ENCODE measurements at regions of chr2 and their contacts with region 1.

Region 1: DNA sequence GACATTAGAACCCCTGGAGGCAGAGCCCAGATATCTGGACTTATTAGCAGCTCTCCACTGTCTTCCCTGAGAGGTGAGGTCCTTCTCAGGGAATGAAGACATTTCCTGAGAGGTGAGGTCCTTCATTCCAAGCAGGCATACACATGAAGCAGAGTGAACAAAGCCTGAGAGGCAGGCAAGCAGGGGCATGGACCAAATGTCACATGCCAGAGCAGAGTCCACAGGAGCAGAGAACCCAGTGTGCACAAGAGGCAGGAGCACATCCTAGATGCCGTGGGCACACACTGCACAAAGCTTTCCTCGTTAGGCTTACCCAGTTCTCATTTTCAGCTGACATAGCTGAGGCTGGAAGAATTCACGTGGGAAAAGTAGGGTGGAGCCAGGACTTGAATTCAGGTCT is 759.9 kb upstream of the HS6ST1 start:
- DNase-seq: no peak
- CTCF ChIP-seq: no peak

Region 2: GRCh38 chr2:128988326-128988725 is 90.2 kb before region 1 on chr2:
- CTCF ChIA-PET with region 1: no interaction called
- POLR2A ChIA-PET with region 1: no interaction called
- DNase-seq: no peak
- CTCF ChIP-seq: no peak

Region 3: DNA sequence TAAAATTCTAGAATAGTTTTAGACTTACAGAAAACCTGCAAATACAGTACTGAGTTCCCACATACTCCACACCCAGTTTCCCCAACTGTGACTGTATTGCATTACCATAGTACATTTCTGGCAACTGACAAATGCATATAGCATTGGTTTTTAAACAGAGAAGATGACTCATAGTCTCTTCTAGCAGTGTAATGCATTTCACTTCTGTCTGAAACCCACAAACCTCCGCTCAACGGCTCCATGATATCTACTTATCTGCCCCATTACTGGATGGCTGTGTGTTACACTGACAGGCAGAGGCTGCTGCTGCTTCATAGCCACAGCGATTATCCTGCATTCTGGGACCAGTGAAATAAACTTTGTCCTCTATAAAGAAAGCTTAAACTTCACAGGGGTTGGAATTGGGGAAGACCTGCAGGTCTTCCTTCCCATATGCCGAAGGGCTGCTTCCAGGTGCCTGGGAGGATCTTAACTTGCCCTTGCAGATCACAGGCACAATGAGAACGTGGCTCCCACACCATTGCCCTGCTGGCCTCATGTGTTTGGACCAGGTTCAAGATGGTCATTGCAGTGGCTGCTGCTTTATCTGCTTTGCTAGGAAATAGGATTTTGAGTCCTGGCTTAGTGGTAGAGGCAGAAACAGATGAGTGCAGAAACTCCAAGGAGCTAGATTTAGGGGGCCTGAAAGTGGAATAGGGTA is 17.3 kb before region 1 on chr2:
- CTCF ChIA-PET with region 1: interaction called, 10 read pairs
- POLR2A ChIA-PET with region 1: no interaction called
- DNase-seq: peak; percentile 60
- CTCF ChIP-seq: no peak

Region 4: DNA sequence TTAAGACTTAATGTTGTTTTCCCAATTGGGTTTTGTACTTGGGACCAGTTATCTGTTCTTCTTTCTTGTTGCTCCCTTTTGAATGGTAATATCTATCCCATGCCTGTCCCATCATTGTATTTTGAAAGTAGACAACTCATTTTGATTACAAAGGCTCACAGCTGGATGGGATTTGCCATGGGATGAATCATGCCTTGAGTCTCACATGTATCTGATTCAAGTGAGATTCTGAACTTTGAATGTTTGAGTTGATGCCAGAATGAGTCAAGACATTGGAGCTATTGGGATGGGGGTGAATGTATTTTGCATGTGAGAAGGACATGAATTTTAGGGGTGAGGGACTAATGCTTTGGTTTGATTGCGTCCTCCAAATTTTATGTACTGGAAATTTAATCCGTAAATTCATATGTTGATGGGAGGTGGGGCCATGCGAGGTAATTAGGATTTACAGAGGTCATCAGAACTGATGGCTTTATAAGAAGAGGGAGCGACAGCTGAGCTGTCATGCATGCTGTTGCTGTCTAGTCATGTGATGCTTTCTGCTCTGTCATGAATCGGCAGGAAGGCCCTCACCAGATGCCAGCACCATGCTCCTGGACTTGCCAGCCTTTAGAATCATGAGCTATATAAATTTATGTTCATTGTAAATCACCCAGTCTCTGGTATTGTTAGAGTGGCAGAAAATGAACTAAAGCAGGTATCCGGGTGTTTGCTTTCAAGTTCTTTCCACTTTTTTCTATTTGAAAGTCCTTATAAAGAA is 159.6 kb after region 1 on chr2:
- CTCF ChIA-PET with region 1: no interaction called
- POLR2A ChIA-PET with region 1: no interaction called
- DNase-seq: no peak
- CTCF ChIP-seq: no peak